ENCODE measurements at regions of chr1 and their contacts with region 1.

Region 1: DNA sequence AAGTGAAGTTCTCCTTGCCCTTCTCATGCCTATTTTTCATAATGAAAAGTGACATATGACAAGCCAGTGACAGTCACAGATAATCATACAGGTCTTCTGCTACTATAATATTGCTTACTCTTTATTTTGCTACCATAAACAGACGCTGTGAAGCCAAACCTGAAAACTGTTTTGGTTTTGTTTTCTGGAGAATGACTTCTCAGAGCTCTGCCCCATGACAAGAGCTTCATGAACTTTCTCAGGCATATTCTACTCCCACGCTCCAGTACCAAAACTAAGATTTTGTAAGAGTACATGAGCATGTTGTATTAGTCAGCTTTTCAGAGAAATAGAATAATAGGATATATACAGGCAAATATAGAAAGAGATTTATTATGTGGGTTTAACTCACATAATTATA is 64.3 kb upstream of the VTCN1 start:
- DNase-seq: no peak
- ATAC-seq: peak; percentile 57
- H3K4me3 Mint-ChIP-seq: no peak overlapping the region
- H3K27ac Mint-ChIP-seq: no peak overlapping the region
- H3K4me1 Mint-ChIP-seq: no peaks in the 10 kb centered on the region
- H3K27me3 Mint-ChIP-seq: no peaks in the 10 kb centered on the region

Region 2: DNA sequence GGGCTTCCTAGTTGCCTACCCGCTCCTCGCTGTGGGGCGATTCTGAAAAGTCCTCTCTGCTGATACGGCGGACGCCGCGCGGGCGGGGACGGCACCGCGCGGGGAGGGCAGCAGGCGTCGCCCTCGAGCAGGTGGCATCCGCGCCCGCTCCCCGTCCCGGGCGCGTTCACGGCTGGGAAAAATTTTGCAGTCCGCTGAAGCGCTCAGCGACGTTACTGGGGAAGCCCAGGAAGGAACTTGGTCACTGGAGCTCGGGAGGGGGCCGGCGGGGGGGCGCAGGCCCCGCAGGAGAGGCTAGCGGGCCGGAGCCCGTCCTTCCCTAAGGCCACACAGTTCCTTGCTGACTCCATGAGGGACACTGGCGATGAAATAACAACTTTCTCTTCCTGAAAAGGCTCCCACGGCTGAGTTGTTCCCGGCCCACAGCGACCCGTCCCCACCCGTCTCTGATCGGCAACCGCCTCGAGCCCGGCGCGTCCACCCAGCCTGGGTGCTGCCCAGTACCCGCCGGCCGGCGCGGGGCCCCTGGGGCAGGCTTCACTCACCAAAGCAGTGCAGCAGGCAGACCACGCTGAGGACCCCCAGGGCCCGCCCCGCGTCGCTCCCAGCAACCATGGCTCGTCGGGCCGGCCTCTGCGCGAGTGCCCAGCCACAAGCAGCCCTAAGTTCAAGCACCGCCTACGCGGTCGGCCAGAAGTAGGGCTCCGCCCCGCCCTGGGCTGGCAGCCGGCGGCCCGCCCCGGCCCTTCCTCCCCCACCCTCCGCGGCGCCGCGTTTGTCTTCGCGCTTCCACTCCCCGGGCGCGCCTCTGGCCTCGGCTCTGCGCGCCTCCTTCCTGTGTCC is 704.5 kb before region 1 on chr1 and contains the start of gene CD58:
- CTCF ChIA-PET with region 1: no interaction called
- POLR2A ChIA-PET with region 1: no interaction called
- intact Hi-C with region 1: no loop called
- DNase-seq: peak; percentile 93
- ATAC-seq: peak; percentile 77
- H3K4me3 Mint-ChIP-seq: peak within 1 kb of the TSS; percentile 91
- H3K27ac Mint-ChIP-seq: peak within 1 kb of the TSS; percentile 87
- H3K4me1 Mint-ChIP-seq: peaks cover 64% of the 10 kb centered on the region
- H3K27me3 Mint-ChIP-seq: peaks cover 8% of the 10 kb centered on the region
- total RNA-seq, gene CD58: 12.4 to 16.0 TPM

Region 3: GRCh38 chr1:117250061-117250606 is 24.9 kb before region 1 on chr1:
- CTCF ChIA-PET with region 1: interaction called, 5 read pairs
- POLR2A ChIA-PET with region 1: no interaction called
- intact Hi-C with region 1: loop called in 1 of 2 experiments (anchors 2 kb)
- DNase-seq: no peak
- ATAC-seq: no peak
- H3K4me3 Mint-ChIP-seq: no peak overlapping the region
- H3K27ac Mint-ChIP-seq: no peak overlapping the region
- H3K4me1 Mint-ChIP-seq: no peaks in the 10 kb centered on the region
- H3K27me3 Mint-ChIP-seq: peaks cover 12% of the 10 kb centered on the region